Transverse colon (tissue), 4 donors: ENCODE measurements at regions of chr16 and their contacts with region 1.

Region 1: GRCh38 chr16:30902029-30902972 is 5.9 kb downstream of the CTF1 start:
- DNase-seq: peak; percentile 74
- H3K4me3 ChIP-seq: peak overlapping the region; percentile 55 to 73 (median 60)
- H3K27ac ChIP-seq: peak overlapping the region; percentile 90 to 96 (median 95)
- H3K4me1 ChIP-seq: peaks cover 3 to 33% (median 12%) of the 10 kb centered on the region in 4 donors
- H3K27me3 ChIP-seq: no peaks in the 10 kb centered on the region
- CTCF ChIP-seq: peak in 4 of 5 experiments; percentile 2 to 42 (median 38)
- EP300 ChIP-seq: no peak
- POLR2A ChIP-seq: peak; percentile 45

Region 2: DNA sequence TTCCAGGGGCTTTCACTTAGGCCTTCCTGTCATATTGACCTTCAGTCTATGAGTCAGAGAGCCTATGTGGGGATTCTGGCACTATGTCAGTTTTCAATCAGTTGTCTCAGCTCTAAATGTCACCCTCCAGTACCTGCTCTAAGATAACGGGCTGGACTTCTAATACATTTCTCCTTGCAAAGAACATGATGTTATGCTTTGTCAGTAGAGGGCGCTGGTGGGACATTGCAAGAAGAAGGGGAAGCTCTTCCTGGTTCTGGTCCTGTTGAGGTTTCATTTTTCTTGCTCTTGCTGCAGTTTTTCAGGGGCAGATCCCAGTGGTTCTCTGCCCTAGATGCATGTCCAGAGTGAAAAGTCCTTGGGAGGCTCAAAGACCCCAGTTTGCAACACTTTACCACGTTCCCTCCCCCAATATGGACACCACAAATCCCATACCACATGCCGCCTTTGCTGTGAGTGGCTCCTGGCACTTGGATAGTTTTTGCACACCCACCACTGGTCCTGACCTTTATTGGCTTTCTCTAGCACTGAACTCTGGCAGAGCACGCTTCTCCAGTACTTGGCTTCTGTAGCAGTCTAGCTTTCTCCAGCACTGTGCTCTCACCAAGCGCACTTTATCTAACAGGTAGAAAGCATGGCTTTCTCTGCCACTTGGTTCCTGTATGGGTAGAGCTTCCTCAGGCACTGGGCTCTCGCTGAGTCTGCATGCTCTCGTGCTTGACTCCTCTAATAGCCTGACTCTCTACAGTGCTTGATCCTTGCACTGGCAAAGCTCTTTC is 57.4 kb before region 1 on chr16:
- in situ Hi-C with region 1: no loop called
- intact Hi-C with region 1: loop called (anchors 5 kb)
- DNase-seq: peak; percentile 76
- H3K4me3 ChIP-seq: peak overlapping the region in 1 of 4 donors; percentile 31
- H3K27ac ChIP-seq: peak overlapping the region; percentile 56 to 71 (median 56)
- H3K4me1 ChIP-seq: peaks cover 5 to 14% (median 8%) of the 10 kb centered on the region in 4 donors
- H3K27me3 ChIP-seq: no peaks in the 10 kb centered on the region
- CTCF ChIP-seq: peak; percentile 87 to 93 (median 88)
- EP300 ChIP-seq: no peak
- POLR2A ChIP-seq: no peak

Region 3: DNA sequence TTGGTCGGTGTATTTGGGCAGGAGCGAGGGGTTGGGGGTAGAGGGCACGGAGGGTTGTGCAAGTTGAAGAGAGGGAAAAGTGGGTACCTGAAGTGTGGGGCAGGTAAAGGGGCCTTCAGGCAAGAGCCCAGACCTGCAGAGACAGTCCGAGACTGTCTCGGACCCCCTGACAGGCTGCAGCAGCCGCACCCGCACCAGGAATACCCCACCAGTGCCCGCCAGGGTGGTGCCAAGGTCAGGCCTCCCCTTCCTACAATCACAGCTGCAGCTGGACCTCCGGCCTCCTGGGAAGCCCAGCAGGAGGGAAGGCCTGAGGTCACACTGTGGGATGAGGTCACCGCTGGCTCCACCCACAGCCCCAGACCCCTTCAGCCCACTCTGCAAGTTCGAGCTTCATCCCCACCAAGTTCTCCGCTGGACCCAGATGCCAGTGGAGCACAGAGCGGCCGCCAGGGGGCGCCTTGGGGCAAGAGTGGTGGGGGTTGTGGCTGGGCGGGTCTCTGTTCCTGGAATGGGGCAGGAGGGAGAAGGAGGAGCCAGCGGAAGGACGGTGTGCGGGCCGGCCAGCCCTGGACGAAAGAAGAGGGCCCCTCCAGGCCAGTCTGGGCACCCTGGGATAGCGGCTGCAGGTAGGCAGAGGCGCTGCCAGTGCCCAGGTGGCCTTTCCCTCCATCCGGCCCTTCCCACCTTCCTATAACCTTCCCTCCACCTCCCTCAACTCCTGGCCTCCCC is 82.5 kb after region 1 on chr16 and contains the start of gene HSD3B7:
- in situ Hi-C with region 1: no loop called
- intact Hi-C with region 1: no loop called
- DNase-seq: peak; percentile 93
- H3K4me3 ChIP-seq: peak within 1 kb of the TSS; percentile 13 to 54 (median 40)
- H3K27ac ChIP-seq: peak within 1 kb of the TSS; percentile 68 to 83 (median 75)
- H3K4me1 ChIP-seq: peaks cover 9 to 12% (median 10%) of the 10 kb centered on the region in 4 donors
- H3K27me3 ChIP-seq: no peaks in the 10 kb centered on the region
- CTCF ChIP-seq: peak; percentile 92 to 98 (median 94)
- EP300 ChIP-seq: no peak
- POLR2A ChIP-seq: peak; percentile 42
- total RNA-seq, gene HSD3B7: 7.0 to 31.8 (median 29.6) TPM